A549 (cell line): ENCODE measurements at regions of chr10 and their contacts with region 1.

Region 1: DNA sequence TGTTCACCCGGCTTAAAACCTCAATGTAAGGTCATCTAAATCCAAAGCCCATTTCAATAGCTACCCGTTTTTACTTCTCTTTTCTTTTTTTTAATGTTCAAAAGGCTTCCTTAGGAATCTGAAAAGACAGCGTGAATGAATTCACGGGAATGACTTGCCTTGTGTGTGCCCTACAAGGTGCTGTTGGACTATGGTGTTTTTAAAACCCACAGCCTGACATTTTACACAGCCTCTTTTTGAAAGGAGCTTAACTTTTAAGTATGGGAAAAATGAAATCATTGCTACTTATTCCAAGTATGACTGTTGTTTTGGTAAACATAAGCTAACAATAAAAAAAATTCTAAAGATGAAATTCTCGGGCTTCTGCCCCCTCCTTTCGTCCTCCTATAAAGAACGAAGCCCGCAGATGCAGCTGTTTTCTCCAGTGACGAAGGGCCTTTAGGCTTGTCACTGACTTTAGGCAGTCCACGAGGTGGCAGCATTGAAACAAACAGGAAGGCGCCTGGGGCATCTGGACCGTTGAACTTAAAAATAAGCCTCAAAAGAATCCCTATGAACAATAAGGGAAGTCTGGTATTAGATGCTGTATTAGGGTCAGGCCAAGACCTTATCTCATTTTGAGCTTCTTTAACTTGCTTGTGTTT is 141.3 kb downstream of the NRP1 start:
- DNase-seq: peak; percentile 75 to 93
- ATAC-seq: peak; percentile 78 to 80
- H3K4me3 ChIP-seq: no peak overlapping the region
- H3K27ac ChIP-seq: peak overlapping the region; percentile 79 to 86
- H3K4me1 ChIP-seq: peaks cover 57% of the 10 kb centered on the region
- CTCF ChIP-seq: peak; percentile 93
- EP300 ChIP-seq: no peak
- POLR2A ChIP-seq: no peak
- RAD21 ChIP-seq: peak; percentile 94 to 95

Region 2: GRCh38 chr10:32318476-32318896 is 874.7 kb before region 1 on chr10:
- CTCF ChIA-PET with region 1: no interaction called
- POLR2A ChIA-PET with region 1: no interaction called
- DNase-seq: no peak
- ATAC-seq: no peak
- H3K4me3 ChIP-seq: no peak overlapping the region
- H3K27ac ChIP-seq: no peak overlapping the region
- H3K4me1 ChIP-seq: peaks cover 25% of the 10 kb centered on the region
- CTCF ChIP-seq: no peak
- EP300 ChIP-seq: no peak
- POLR2A ChIP-seq: no peak
- RAD21 ChIP-seq: no peak

Region 3: DNA sequence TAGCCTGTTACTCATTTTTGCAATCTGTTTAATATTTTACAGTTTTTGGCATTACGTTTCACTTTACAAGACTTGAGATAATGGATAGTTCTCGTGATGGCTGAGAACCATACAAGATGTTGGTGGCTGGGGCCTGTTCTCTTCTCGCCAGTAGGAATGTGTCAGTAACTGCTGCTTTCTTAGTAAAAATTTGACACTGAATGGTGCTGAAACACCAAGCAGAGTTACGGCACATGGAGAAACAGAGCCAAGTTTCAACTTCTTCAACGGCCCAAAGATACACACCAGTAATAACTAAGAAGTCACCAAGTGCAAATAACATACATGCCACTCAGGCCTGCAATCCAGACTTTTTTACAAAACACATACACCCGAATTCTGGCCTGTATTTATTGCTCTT is 10.9 kb after region 1 on chr10:
- CTCF ChIA-PET with region 1: interaction called, 44 read pairs
- POLR2A ChIA-PET with region 1: no interaction called
- DNase-seq: no peak
- ATAC-seq: no peak
- H3K4me3 ChIP-seq: no peak overlapping the region
- H3K27ac ChIP-seq: 0 out of 6 replicates have a peak overlapping the region, but pooled peaks of 1 of the 2 experiments have one; percentile 25
- H3K4me1 ChIP-seq: peaks cover 19% of the 10 kb centered on the region
- CTCF ChIP-seq: no peak
- EP300 ChIP-seq: no peak
- POLR2A ChIP-seq: no peak
- RAD21 ChIP-seq: no peak

Region 4: GRCh38 chr10:33237736-33238624 is 44.8 kb after region 1 on chr10:
- CTCF ChIA-PET with region 1: interaction called, 10 read pairs
- POLR2A ChIA-PET with region 1: no interaction called
- DNase-seq: peak; percentile 90 to 96
- ATAC-seq: peak; percentile 94 to 97
- H3K4me3 ChIP-seq: no peak overlapping the region
- H3K27ac ChIP-seq: peak overlapping the region; percentile 91 to 92
- H3K4me1 ChIP-seq: peaks cover 84% of the 10 kb centered on the region
- CTCF ChIP-seq: no peak
- EP300 ChIP-seq: peak; percentile 79 to 83; a peak in 3 of 5 replicates
- POLR2A ChIP-seq: no peak
- RAD21 ChIP-seq: peak; percentile 28 to 44; a peak in 4 of 5 replicates

Region 5: GRCh38 chr10:33263453-33263852 is 70.3 kb after region 1 on chr10:
- CTCF ChIA-PET with region 1: interaction called, 11 read pairs
- POLR2A ChIA-PET with region 1: interaction called, 4 read pairs
- DNase-seq: no peak
- ATAC-seq: no peak
- H3K4me3 ChIP-seq: 0 out of 3 replicates have a peak overlapping the region, but pooled peaks have one; percentile 5
- H3K27ac ChIP-seq: peak overlapping the region; percentile 87 to 88
- H3K4me1 ChIP-seq: peaks cover 77% of the 10 kb centered on the region
- CTCF ChIP-seq: no peak
- EP300 ChIP-seq: 0 out of 5 replicates have a peak, but pooled peaks of 1 of the 2 experiments have one; percentile 20
- POLR2A ChIP-seq: no peak
- RAD21 ChIP-seq: no peak

Region 6: DNA sequence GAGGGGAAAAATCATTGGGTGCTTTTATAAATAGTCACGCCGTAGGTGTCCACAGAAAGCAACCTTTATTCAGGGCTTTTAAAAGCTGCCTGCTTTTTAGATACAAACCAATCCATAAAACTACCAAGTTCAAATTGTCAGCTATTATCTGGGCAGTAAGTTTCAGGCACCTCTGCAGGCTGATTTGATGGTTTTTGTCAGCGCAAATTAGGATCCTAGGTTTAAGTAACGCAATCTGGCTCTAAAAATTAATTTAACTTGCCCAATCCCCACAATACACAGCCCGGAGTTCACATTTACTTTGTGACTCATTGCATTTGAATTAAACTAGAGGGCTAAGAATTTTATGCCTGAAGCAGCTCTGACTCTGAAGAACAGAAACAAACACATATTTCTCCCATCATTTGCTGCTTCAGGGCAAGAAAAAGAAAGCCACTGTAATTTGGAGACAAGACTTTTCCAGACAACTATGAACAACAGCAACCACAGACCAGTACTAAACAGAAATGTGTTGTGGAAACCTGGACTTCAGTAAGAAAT is 97.9 kb after region 1 on chr10:
- CTCF ChIA-PET with region 1: interaction called, 11 read pairs
- POLR2A ChIA-PET with region 1: no interaction called
- DNase-seq: peak; percentile 60 to 63
- ATAC-seq: peak; percentile 75 to 80; a peak in 5 of 6 replicates
- H3K4me3 ChIP-seq: peak overlapping the region; percentile 11; the same call in 2 of the 3 replicates
- H3K27ac ChIP-seq: peak overlapping the region; percentile 75 to 89
- H3K4me1 ChIP-seq: peaks cover 78% of the 10 kb centered on the region
- CTCF ChIP-seq: 0 out of 3 replicates have a peak, but pooled peaks have one; percentile 3
- EP300 ChIP-seq: peak in 1 of 2 experiments; percentile 56; a peak in 1 of 5 replicates
- POLR2A ChIP-seq: no peak
- RAD21 ChIP-seq: no peak; a peak in 1 of 5 replicates